MCF 10A (cell line): ENCODE measurements at regions of chr9 and their contacts with region 1.

Region 1: GRCh38 chr9:73149371-73150067 is 2.1 kb upstream of the ANXA1 start:
- DNase-seq: peak; percentile 83
- H3K4me3 Mint-ChIP-seq: peak overlapping the region; percentile 56
- H3K27ac Mint-ChIP-seq: peak overlapping the region; percentile 86
- H3K4me1 Mint-ChIP-seq: peaks cover 40% of the 10 kb centered on the region
- H3K27me3 Mint-ChIP-seq: no peaks in the 10 kb centered on the region
- CTCF ChIP-seq: no peak

Region 2: GRCh38 chr9:72443855-72444254 is 705.7 kb before region 1 on chr9:
- CTCF ChIA-PET with region 1: no interaction called
- POLR2A ChIA-PET with region 1: no interaction called
- intact Hi-C with region 1: no loop called
- DNase-seq: no peak
- H3K4me3 Mint-ChIP-seq: no peak overlapping the region
- H3K27ac Mint-ChIP-seq: peak overlapping the region; percentile 1
- H3K4me1 Mint-ChIP-seq: peaks cover 31% of the 10 kb centered on the region
- H3K27me3 Mint-ChIP-seq: no peaks in the 10 kb centered on the region
- CTCF ChIP-seq: no peak

Region 3: GRCh38 chr9:73104342-73104741 is 45.2 kb before region 1 on chr9:
- CTCF ChIA-PET with region 1: interaction called, 21 read pairs
- POLR2A ChIA-PET with region 1: interaction called, 47 read pairs
- intact Hi-C with region 1: loop called (anchors 1 kb)
- DNase-seq: no peak
- H3K4me3 Mint-ChIP-seq: no peak overlapping the region
- H3K27ac Mint-ChIP-seq: no peak overlapping the region
- H3K4me1 Mint-ChIP-seq: peaks cover 7% of the 10 kb centered on the region
- H3K27me3 Mint-ChIP-seq: no peaks in the 10 kb centered on the region
- CTCF ChIP-seq: no peak

Region 4: GRCh38 chr9:73132034-73132776 is 17.3 kb before region 1 on chr9:
- CTCF ChIA-PET with region 1: interaction called, 6 read pairs
- POLR2A ChIA-PET with region 1: interaction called, 241 read pairs
- intact Hi-C with region 1: loop called (anchors 1 kb)
- DNase-seq: peak; percentile 90
- H3K4me3 Mint-ChIP-seq: peak overlapping the region; percentile 76
- H3K27ac Mint-ChIP-seq: peak overlapping the region; percentile 97
- H3K4me1 Mint-ChIP-seq: peaks cover 31% of the 10 kb centered on the region
- H3K27me3 Mint-ChIP-seq: no peaks in the 10 kb centered on the region
- CTCF ChIP-seq: no peak

Region 5: DNA sequence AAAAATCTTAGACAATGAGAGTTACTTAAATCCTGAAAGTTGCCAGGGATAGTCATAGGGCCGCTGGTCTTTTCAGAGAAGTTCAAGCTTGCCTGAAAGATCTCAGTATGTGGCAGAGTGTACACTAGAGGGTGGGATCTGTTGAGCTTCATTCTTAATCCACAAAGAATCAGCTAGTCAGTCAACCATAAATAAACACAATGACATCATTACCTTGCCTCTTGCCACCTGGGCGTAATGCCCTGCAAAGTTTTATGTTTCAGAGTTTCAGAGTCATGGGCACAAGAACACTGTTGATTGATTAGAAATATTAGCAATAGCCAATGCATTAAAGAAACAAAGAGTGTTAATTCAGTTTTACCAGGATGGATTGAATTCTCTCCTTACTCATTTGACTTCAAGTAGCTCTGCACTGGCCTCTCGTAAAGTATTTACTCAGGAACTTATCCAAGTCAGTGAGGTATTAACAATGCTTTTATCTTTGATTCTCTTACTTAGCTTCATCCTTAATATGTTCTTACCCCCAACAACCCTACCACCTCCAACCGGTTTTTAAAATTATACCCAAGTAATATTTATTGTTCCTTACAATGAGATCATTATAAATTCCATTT is 12.1 kb before region 1 on chr9:
- CTCF ChIA-PET with region 1: interaction called, 6 read pairs
- POLR2A ChIA-PET with region 1: interaction called, 241 read pairs
- intact Hi-C with region 1: loop called (anchors 1 kb)
- DNase-seq: peak; percentile 67
- H3K4me3 Mint-ChIP-seq: peak overlapping the region; percentile 56
- H3K27ac Mint-ChIP-seq: peak overlapping the region; percentile 7
- H3K4me1 Mint-ChIP-seq: peaks cover 28% of the 10 kb centered on the region
- H3K27me3 Mint-ChIP-seq: no peaks in the 10 kb centered on the region
- CTCF ChIP-seq: no peak

Region 6: DNA sequence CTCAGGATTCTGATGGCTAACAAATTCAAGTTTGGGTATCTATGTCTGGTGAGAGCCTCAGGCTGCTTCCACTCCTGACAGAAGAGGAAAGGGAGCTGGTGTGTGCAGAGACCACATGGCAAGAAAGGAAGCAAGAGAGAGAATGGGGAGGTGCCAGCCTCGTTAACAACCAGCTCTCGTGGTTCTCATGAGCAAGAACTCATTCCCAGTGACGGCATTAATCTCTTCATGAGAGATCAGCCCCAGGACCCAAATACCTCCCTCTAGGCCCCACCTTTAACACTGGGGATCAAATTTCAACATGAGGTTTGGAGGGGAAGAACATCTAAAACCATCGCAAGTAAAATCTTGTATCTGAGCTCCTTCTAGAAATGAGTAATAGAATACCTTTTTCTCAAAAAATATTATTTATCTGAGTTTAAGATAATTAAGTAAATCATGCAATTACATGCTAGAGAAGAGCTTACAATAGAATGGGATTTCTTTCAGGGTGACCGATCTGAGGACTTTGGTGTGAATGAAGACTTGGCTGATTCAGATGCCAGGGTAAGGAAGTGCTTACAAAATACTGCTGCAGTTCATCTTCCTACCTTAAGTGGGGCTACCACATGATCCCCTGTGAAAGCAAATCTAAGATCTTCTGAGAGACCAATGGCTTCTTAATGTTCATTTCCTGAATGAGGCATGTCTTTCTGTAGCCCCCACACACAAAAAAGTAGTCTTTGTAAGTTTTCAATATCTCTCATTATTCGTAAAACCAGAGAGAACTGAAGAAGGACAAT is 13.7 kb after region 1 on chr9:
- CTCF ChIA-PET with region 1: interaction called, 4 read pairs
- POLR2A ChIA-PET with region 1: interaction called, 10 read pairs
- intact Hi-C with region 1: no loop called
- DNase-seq: no peak
- H3K4me3 Mint-ChIP-seq: no peak overlapping the region
- H3K27ac Mint-ChIP-seq: no peak overlapping the region
- H3K4me1 Mint-ChIP-seq: peaks cover 4% of the 10 kb centered on the region
- H3K27me3 Mint-ChIP-seq: no peaks in the 10 kb centered on the region
- CTCF ChIP-seq: no peak

Region 7: DNA sequence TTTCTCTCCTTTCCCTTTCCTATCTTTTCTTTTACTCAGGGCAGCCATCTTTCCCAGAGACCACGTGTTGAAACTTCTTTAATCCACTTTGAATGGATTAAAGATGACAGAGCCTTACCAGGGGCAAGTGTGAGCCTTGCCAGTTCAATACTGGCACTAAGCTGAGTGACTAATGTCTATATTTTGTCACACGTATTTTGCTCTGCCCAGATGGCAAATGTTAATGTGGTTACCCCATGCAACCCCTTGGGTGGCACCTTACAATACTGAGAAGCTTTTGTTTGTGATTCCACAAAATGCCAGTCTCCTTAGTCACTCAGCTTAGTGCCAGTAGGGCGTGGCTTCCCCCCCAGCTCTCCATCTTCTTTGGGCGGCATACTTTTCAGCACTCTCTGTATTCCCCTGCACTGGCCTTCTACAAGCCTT is 26.9 kb after region 1 on chr9:
- CTCF ChIA-PET with region 1: interaction called, 3 read pairs
- POLR2A ChIA-PET with region 1: interaction called, 34 read pairs
- intact Hi-C with region 1: no loop called
- DNase-seq: peak; percentile 80
- H3K4me3 Mint-ChIP-seq: no peak overlapping the region
- H3K27ac Mint-ChIP-seq: peak overlapping the region; percentile 83
- H3K4me1 Mint-ChIP-seq: peaks cover 15% of the 10 kb centered on the region
- H3K27me3 Mint-ChIP-seq: no peaks in the 10 kb centered on the region
- CTCF ChIP-seq: no peak